IMR-90 (cell line): ENCODE measurements at regions of chr10 and their contacts with region 1.

Region 1: DNA sequence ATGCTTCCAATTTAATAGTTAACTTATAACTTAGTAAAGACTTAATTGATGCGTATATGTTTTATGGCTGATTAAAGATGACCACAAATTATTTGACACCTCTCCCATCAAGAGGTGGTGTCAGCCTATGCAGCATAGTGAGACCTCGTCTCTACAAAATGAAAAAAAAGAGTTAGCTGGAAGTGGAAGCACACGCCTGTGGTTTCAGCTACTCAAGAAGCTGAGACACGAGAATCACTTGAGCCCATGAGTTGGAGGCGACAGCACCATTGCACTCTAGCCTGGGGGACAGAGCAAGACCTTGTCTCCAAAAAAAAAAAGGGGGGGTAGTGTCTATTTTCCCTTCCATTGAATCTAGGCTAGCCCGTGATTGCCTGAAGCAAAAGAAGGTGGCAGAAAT is 99.1 kb upstream of the ABI1 start:
- DNase-seq: no peak
- ATAC-seq: no peak
- H3K4me3 ChIP-seq: no peak overlapping the region
- H3K27ac ChIP-seq: no peak overlapping the region
- H3K4me1 ChIP-seq: peaks cover 2% of the 10 kb centered on the region; the same call in 1 of the 2 replicates
- H3K27me3 ChIP-seq: no peaks in the 10 kb centered on the region
- CTCF ChIP-seq: no peak
- POLR2A ChIP-seq: no peak
- RAD21 ChIP-seq: no peak

Region 2: DNA sequence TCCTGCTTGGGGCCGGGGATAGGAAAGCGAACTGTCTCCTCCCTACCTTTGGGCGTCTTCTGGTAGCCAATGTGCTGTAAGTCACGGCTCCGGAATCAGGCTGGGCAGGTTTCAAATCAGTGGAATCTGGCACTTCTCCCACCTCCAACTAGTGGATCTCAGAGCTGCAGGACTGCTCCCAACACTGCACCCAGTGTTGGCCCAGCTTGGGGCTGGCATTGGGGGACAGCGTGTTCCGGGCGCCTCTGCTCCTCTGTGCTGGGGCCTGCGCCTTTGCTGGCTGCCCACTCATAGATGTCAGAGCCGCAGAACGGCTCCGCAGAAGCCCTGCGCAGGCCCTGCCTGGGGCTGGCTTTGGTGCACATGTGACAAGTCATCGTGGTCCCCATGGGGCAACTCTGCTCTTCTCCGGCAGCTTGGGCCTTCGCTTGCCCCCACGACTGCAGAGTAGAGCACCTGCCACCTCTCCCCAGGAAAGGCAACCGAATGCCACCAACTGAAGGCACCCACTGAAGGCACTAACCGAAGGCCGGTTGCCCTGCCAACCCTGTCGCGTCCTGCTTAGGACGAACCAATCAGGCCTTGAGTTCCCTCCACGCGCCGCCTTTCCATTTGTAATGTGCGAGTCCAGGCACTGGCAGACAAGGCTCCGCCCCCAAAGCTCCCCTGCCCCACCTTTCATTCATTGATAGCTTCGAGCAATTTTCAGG is 13.6 kb before region 1 on chr10:
- CTCF ChIA-PET with region 1: interaction called, 11 read pairs
- POLR2A ChIA-PET with region 1: interaction called, 7 read pairs
- dilution Hi-C with region 1: no loop called
- in situ Hi-C with region 1: no loop called
- intact Hi-C with region 1: no loop called
- DNase-seq: no peak
- ATAC-seq: peak; percentile 46
- H3K4me3 ChIP-seq: no peak overlapping the region
- H3K27ac ChIP-seq: no peak overlapping the region
- H3K4me1 ChIP-seq: no peaks in the 10 kb centered on the region; the same call in 1 of the 2 replicates
- H3K27me3 ChIP-seq: no peaks in the 10 kb centered on the region; the same call in 1 of the 2 replicates
- CTCF ChIP-seq: no peak
- POLR2A ChIP-seq: no peak
- RAD21 ChIP-seq: no peak

Region 3: GRCh38 chr10:26970667-26971066 is 10.8 kb after region 1 on chr10:
- CTCF ChIA-PET with region 1: no interaction called
- POLR2A ChIA-PET with region 1: no interaction called
- dilution Hi-C with region 1: no loop called
- in situ Hi-C with region 1: no loop called
- intact Hi-C with region 1: no loop called
- DNase-seq: no peak
- ATAC-seq: no peak
- H3K4me3 ChIP-seq: no peak overlapping the region
- H3K27ac ChIP-seq: no peak overlapping the region
- H3K4me1 ChIP-seq: no peaks in the 10 kb centered on the region
- H3K27me3 ChIP-seq: no peaks in the 10 kb centered on the region
- CTCF ChIP-seq: no peak
- POLR2A ChIP-seq: no peak
- RAD21 ChIP-seq: no peak

Region 4: GRCh38 chr10:28291881-28292297 is 1332.0 kb after region 1 on chr10:
- CTCF ChIA-PET with region 1: no interaction called
- POLR2A ChIA-PET with region 1: no interaction called
- dilution Hi-C with region 1: no loop called
- in situ Hi-C with region 1: no loop called
- intact Hi-C with region 1: no loop called
- DNase-seq: peak; percentile 93
- ATAC-seq: peak; percentile 100
- H3K4me3 ChIP-seq: no peak overlapping the region
- H3K27ac ChIP-seq: no peak overlapping the region
- H3K4me1 ChIP-seq: peaks cover 4% of the 10 kb centered on the region
- H3K27me3 ChIP-seq: 0 out of 2 replicates have a peak, but pooled peaks cover 3% of the 10 kb centered on the region
- CTCF ChIP-seq: no peak
- POLR2A ChIP-seq: no peak
- RAD21 ChIP-seq: no peak